ENCODE measurements at regions of chr6 and their contacts with region 1.

Region 1: DNA sequence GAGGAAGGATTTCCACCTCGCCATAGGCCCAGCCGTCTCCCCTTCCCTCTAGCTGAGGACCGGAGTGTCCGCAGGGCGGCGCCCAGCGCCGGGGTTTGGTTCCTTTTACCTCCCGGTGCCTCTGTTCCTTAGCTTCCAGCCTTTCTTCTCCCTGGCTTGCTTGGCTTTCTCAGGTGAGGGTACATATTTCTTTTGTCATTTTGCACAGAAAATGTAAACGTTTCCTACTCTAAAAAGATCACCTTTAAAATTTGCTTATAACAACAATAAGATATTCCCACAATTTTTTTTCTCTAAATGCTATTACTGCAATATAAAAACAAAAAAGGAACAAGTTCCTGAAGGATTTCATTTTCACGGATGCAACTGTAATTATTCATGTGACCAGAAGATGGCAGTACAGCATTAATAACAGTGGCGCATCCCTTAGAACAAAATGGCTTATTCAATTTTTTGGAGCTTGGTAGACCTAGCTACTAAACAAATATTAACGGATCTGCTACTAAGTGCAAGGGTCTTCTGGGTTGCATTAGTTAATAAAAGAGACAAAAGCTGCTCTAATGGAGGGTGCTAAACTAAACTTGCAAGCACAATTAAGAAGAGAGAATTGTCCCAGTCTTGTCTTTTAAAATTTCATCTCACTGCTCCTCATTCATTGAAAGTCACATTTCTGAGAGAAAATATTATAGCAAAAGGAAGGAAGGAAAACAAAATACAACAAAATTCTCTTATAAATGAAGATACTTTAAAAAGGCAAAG is 172.9 kb downstream of the ADGRG6 start:
- DNase-seq: no peak
- H3K4me3 ChIP-seq: no peak overlapping the region
- H3K27me3 ChIP-seq: no peaks in the 10 kb centered on the region
- CTCF ChIP-seq: peak; percentile 49

Region 2: GRCh38 chr6:142459271-142459670 is 15.4 kb before region 1 on chr6:
- CTCF ChIA-PET with region 1: interaction called, 19 read pairs
- POLR2A ChIA-PET with region 1: no interaction called
- DNase-seq: no peak
- H3K4me3 ChIP-seq: no peak overlapping the region
- H3K27me3 ChIP-seq: no peaks in the 10 kb centered on the region
- CTCF ChIP-seq: no peak

Region 3: GRCh38 chr6:142845624-142846458 is 371.1 kb after region 1 on chr6:
- CTCF ChIA-PET with region 1: no interaction called
- POLR2A ChIA-PET with region 1: no interaction called
- DNase-seq: no peak
- H3K4me3 ChIP-seq: no peak overlapping the region
- H3K27me3 ChIP-seq: no peaks in the 10 kb centered on the region
- CTCF ChIP-seq: no peak

Measured in BJ (cell line).